CD8-positive, alpha-beta T cell (primary cell): ENCODE measurements at regions of chr10 and their contacts with region 1.

Region 1: DNA sequence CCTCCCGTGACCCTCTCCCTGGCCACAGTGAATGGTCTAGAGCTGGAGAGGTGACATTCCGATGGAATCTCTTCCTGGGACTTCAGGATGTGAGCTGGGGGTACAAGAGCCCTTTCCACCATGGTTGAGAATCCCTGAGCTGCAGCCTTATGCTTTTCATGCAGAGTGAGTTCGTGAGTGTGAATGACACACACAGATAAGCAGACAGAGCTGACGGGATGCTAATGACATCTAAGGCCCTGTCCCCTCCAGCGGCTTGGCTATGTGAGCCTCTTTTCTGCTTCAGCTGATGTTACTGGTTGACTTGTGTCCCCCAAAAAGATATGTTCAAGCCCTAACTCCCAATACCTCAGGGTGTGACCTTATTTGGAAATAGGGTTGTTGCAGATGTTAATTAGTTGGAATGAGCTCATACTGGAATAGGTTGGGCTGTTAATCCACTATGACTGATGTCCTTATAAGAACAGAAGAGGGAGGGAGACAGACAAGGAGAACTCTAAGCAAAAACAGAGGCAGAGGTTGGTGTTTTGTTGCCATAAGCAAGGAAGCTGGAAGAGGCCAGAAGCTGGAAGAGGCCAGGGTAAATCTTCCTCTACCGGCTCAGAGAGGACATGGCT is 111.1 kb upstream of the AFAP1L2 start:
- DNase-seq: peak in 1 of 9 experiments; percentile 27
- ATAC-seq: peak; percentile 13
- H3K4me3 ChIP-seq: peak overlapping the region in 1 of 2 experiments; percentile 24
- H3K4me3 Mint-ChIP-seq: peak overlapping the region; percentile 77
- H3K27ac ChIP-seq: peak overlapping the region in 1 of 2 experiments; percentile 4
- H3K27ac Mint-ChIP-seq: peak overlapping the region; percentile 97
- H3K4me1 ChIP-seq: peaks cover 89% of the 10 kb centered on the region
- H3K4me1 Mint-ChIP-seq: peaks cover 98% of the 10 kb centered on the region
- H3K27me3 ChIP-seq: no peaks in the 10 kb centered on the region
- H3K27me3 Mint-ChIP-seq: no peaks in the 10 kb centered on the region
- CTCF ChIP-seq: no peak

Region 2: GRCh38 chr10:114427124-114427852 is 88.1 kb before region 1 on chr10:
- CTCF ChIA-PET with region 1: no interaction called
- POLR2A ChIA-PET with region 1: no interaction called
- intact Hi-C with region 1: no loop called
- DNase-seq: no peak
- ATAC-seq: no peak
- H3K4me3 ChIP-seq: no peak overlapping the region
- H3K4me3 Mint-ChIP-seq: no peak overlapping the region
- H3K27ac ChIP-seq: no peak overlapping the region
- H3K27ac Mint-ChIP-seq: no peak overlapping the region
- H3K4me1 ChIP-seq: no peaks in the 10 kb centered on the region
- H3K4me1 Mint-ChIP-seq: no peaks in the 10 kb centered on the region
- H3K27me3 ChIP-seq: no peaks in the 10 kb centered on the region
- H3K27me3 Mint-ChIP-seq: no peaks in the 10 kb centered on the region
- CTCF ChIP-seq: no peak

Region 3: DNA sequence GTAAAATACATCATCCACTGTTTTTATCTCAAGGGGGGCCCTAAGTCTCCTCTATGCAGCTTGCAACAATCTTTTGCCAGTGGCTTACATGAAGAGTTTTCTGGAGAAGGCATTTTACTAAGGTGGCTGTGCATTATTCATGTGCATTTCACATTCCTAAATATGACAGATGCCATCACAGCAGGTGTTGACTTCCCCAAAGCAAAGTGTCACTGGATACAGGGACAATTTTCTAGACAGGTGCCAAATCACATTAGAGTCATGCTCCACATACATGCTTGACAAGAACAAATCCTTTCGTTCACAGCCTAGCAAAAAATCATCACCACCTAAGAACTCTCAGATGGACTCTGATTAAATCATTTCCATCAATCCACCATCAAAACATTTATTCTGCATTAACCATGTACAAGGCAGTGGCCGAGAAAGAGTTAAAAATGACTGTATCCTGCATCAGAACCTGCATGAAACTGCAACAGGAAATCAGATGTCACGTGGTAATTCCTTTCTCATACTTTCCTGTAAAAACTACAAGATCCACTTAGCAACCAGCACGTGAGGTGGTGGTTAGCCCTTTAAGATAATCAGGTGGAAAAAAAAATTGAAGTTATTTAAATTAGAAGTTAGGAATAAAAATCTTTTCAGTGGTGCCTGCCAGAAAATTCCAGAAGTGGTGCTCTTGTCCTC is 22.9 kb before region 1 on chr10:
- CTCF ChIA-PET with region 1: interaction called, 3 read pairs
- POLR2A ChIA-PET with region 1: interaction called, 3 read pairs
- intact Hi-C with region 1: loop called in 1 of 2 experiments (anchors 1 kb)
- DNase-seq: peak in 2 of 9 experiments; percentile 30 to 67
- ATAC-seq: peak; percentile 22
- H3K4me3 ChIP-seq: no peak overlapping the region
- H3K4me3 Mint-ChIP-seq: peak overlapping the region; percentile 67
- H3K27ac ChIP-seq: peak overlapping the region; percentile 20 to 24
- H3K27ac Mint-ChIP-seq: peak overlapping the region; percentile 83
- H3K4me1 ChIP-seq: peaks cover 68% of the 10 kb centered on the region
- H3K4me1 Mint-ChIP-seq: peaks cover 84% of the 10 kb centered on the region
- H3K27me3 ChIP-seq: no peaks in the 10 kb centered on the region
- H3K27me3 Mint-ChIP-seq: no peaks in the 10 kb centered on the region
- CTCF ChIP-seq: no peak

Region 4: DNA sequence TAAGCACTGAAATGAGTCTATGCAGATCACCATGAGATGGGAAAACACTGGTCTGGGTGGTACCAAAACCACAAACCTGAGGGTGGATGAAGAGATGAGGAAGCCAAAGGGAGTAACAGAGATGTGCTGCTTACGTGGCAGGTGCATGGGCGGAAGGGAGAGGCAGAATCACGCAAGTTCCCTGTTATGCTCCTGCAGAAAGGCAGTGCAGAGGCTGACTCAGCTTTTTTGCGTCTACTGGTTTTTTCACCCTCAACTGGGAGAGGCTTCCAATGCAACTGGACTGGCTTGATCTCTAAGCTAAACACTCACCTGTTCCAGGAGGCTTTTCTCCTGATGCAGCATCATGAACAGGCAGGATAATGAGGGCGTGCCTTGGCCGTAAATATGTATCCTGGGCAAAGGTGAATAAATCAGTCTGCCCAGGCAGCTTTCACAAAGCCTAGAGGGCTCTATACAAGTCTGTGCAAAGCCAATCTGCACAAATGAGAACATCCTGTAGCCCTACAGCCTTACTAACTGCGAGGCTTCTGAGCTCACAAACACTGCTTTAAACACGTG is 15.7 kb before region 1 on chr10:
- CTCF ChIA-PET with region 1: interaction called, 5 read pairs
- POLR2A ChIA-PET with region 1: interaction called, 19 read pairs
- intact Hi-C with region 1: loop called (anchors 1 to 2 kb)
- DNase-seq: peak in 7 of 9 experiments; percentile 19 to 80 (median 64)
- ATAC-seq: peak; percentile 50
- H3K4me3 ChIP-seq: peak overlapping the region in 1 of 2 experiments; percentile 21
- H3K4me3 Mint-ChIP-seq: peak overlapping the region; percentile 63
- H3K27ac ChIP-seq: peak overlapping the region; percentile 41 to 57
- H3K27ac Mint-ChIP-seq: peak overlapping the region; percentile 94
- H3K4me1 ChIP-seq: peaks cover 92% of the 10 kb centered on the region
- H3K4me1 Mint-ChIP-seq: peaks cover 91% of the 10 kb centered on the region
- H3K27me3 ChIP-seq: no peaks in the 10 kb centered on the region
- H3K27me3 Mint-ChIP-seq: no peaks in the 10 kb centered on the region
- CTCF ChIP-seq: no peak